Activated CD4-positive, alpha-beta T cell treated with anti-CD3 and anti-CD28 coated beads for 36 hours (primary cell): ENCODE measurements at regions of chr14 and their contacts with region 1.

Region 1: DNA sequence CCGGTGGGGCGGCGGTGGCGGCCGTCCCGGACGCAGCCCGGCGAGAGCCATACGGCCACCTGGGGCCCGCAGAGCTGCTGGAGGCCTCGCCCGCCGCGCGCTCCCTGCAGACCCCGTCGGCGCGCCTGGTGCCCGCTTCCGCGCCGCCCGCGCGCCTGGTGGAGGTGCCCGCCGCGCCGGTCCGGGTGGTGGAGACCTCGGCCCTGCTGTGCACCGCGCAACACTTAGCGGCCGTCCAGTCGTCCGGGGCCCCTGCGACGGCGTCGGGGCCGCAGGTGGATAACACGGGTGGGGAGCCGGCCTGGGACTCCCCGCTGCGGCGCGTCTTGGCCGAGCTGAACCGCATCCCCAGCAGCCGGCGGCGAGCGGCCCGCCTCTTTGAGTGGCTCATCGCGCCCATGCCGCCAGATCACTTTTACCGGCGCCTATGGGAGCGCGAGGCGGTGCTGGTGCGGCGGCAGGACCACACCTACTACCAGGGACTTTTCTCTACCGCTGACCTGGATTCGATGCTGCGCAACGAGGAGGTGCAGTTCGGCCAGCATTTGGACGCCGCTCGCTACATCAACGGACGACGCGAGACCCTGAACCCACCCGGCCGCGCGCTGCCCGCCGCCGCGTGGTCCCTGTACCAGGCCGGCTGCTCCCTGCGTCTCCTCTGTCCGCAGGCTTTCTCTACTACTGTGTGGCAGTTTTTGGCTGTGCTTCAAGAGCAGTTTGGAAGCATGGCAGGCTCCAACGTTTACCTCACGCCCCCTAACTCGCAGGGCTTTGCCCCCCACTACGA is 716 bp downstream of the RIOX1 start:
- DNase-seq: peak; percentile 84
- ATAC-seq: peak; percentile 79
- H3K4me3 Mint-ChIP-seq: peak overlapping the region; percentile 81
- H3K27ac Mint-ChIP-seq: peak overlapping the region; percentile 75
- H3K4me1 Mint-ChIP-seq: peaks cover 40% of the 10 kb centered on the region
- H3K27me3 Mint-ChIP-seq: peaks cover 2% of the 10 kb centered on the region

Region 2: GRCh38 chr14:73136387-73137225 is 354.8 kb before region 1 on chr14 and contains the start of gene PSEN1:
- CTCF ChIA-PET with region 1: interaction called, 3 read pairs
- POLR2A ChIA-PET with region 1: interaction called, 5 read pairs
- intact Hi-C with region 1: loop called in 1 of 2 experiments (anchors 1 kb)
- DNase-seq: peak; percentile 99
- ATAC-seq: peak; percentile 95
- H3K4me3 Mint-ChIP-seq: peak within 1 kb of the TSS; percentile 86
- H3K27ac Mint-ChIP-seq: peak within 1 kb of the TSS; percentile 82
- H3K4me1 Mint-ChIP-seq: peaks cover 31% of the 10 kb centered on the region
- H3K27me3 Mint-ChIP-seq: no peaks in the 10 kb centered on the region
- total RNA-seq, gene PSEN1: 31.2 to 31.6 TPM

Region 3: DNA sequence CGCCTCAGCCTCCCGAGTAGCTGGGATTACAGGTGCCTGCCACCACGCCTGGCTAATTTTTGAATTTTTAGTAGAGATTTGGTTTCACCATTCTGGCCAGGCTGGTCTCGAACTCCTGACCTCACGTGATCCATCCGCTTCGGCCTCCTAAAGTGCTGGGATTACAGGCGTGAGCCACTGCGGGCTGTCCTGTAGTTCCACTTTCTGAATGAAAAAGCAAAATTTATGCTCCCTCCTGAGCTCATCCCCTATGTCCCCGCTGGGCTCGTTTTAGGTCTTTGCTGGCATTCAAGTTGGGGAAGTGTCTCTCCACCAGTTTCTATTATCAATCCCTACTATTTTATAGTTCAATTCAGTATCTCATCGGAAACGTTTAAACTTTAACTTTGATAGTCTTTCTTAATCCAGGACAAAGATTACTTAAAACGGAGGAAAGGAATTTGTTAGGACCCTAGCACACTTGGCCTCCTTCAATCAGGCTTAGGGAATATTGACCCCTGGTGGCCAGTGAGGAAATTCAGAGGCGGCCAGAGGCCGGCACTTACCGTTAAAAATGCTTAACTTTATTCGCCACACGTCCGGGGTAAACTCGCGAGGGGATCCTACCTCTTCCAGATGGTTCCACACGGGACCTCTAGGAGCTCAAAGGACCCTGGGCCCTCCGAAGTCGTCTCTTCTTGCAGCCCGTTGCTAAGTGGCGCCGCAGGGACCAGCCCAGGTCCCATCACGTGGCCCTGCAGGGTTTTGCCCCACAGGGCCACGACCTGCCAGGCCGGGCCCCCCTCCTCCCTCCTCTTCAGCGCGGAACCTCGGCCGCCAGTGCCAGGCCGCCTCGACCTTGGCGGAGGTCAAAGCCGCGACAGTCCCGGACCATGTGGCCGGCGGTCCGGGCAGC is 141.9 kb after region 1 on chr14:
- CTCF ChIA-PET with region 1: interaction called, 8 read pairs
- POLR2A ChIA-PET with region 1: no interaction called
- intact Hi-C with region 1: loop called in 1 of 2 experiments (anchors 1 kb)
- DNase-seq: peak; percentile 74
- ATAC-seq: peak; percentile 82
- H3K4me3 Mint-ChIP-seq: peak overlapping the region; percentile 49
- H3K27ac Mint-ChIP-seq: peak overlapping the region; percentile 37
- H3K4me1 Mint-ChIP-seq: peaks cover 5% of the 10 kb centered on the region
- H3K27me3 Mint-ChIP-seq: peaks cover 12% of the 10 kb centered on the region

Region 4: DNA sequence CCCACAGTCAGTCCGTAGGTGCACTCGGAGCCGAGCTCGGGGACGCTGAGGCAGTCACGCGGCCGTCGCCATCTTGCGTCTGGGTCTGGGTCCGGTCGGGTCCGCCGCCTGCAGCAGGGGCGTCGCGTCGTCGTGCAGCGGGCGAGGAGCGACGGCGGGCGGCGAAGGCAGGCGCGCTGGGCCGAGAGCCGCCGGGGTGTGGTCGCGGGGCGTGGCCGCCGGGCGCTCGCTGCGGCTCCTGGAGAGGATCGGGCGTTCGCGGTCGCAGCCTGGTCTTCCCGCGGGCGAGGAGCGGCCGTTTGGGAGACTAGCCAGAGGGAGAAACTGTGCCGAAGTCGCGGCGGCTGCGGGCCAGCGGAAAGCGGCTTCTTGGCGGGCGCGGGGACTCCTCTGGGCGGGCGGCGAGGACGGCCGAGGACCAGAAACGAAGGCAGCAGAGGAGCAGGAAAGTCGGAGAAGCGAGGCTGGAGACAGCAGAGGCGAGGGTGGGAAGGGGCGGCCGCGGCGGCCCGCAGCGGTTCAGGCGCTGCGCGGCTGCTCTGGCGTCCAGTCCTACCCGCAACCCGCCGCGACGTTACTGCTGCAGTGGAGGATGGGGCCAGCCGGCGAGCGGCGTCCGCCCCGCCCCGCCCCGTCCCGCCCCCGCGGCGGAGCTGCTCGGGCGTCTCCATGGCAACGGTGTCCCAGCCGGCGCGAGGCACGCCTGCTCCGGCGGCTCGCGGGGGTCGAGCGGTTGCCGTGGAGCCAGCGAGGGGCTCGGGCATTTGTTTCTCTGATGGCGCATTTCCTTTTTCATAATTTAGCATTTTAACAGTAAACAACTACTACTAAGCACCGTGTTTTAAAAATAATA is 222.6 kb after region 1 on chr14 and contains the start of gene PNMA1:
- CTCF ChIA-PET with region 1: no interaction called
- POLR2A ChIA-PET with region 1: no interaction called
- intact Hi-C with region 1: loop called in 1 of 2 experiments (anchors 2 kb)
- DNase-seq: peak; percentile 92
- ATAC-seq: peak; percentile 79
- H3K4me3 Mint-ChIP-seq: peak within 1 kb of the TSS; percentile 98
- H3K27ac Mint-ChIP-seq: peak within 1 kb of the TSS; percentile 94
- H3K4me1 Mint-ChIP-seq: peaks cover 13% of the 10 kb centered on the region
- H3K27me3 Mint-ChIP-seq: no peaks in the 10 kb centered on the region
- total RNA-seq, gene PNMA1: 23.2 to 28.8 TPM

Region 5: DNA sequence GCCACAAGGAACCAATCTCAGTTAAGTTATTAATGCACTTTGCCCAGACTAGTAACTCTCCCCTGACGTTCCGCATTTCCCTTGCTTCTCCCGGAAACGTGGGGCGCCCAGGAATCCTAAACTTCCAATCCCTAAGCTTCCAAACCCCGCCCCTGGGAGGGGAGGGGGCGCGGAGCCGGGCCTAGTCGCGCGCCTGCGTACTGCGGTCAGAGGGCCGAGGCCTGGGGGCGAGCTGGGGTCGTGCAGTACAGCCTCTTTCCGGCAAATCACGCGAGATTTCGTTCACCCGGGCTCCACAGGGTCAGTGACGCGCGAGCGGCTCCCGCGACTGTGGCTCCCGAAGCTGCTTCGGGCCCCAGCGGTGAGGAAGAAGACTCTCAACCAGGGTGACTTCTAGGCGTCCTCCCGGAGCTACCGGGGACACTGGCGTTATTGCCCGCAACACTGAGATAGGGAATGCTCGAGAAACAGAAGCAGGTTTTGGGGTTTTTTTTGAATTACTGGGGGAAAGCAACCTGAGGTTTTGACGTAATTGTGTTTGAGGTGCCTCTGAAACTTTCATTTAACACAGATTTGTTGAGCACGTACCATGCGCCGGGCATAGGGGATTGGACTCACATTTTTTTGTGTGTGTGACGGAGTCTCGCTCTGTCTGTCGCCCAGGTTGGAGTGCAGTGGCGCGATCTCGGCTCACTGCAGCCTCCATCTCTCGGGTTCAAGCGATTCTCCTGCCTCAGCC is 360.4 kb after region 1 on chr14 and contains the start of gene PTGR2:
- CTCF ChIA-PET with region 1: no interaction called
- POLR2A ChIA-PET with region 1: interaction called, 6 read pairs
- intact Hi-C with region 1: loop called in 1 of 2 experiments (anchors 1 kb)
- DNase-seq: peak; percentile 94
- ATAC-seq: peak; percentile 94
- H3K4me3 Mint-ChIP-seq: peak within 1 kb of the TSS; percentile 98
- H3K27ac Mint-ChIP-seq: peak within 1 kb of the TSS; percentile 100
- H3K4me1 Mint-ChIP-seq: peaks cover 24% of the 10 kb centered on the region
- H3K27me3 Mint-ChIP-seq: no peaks in the 10 kb centered on the region
- total RNA-seq, gene PTGR2: 12.6 to 14.3 TPM

Region 6: DNA sequence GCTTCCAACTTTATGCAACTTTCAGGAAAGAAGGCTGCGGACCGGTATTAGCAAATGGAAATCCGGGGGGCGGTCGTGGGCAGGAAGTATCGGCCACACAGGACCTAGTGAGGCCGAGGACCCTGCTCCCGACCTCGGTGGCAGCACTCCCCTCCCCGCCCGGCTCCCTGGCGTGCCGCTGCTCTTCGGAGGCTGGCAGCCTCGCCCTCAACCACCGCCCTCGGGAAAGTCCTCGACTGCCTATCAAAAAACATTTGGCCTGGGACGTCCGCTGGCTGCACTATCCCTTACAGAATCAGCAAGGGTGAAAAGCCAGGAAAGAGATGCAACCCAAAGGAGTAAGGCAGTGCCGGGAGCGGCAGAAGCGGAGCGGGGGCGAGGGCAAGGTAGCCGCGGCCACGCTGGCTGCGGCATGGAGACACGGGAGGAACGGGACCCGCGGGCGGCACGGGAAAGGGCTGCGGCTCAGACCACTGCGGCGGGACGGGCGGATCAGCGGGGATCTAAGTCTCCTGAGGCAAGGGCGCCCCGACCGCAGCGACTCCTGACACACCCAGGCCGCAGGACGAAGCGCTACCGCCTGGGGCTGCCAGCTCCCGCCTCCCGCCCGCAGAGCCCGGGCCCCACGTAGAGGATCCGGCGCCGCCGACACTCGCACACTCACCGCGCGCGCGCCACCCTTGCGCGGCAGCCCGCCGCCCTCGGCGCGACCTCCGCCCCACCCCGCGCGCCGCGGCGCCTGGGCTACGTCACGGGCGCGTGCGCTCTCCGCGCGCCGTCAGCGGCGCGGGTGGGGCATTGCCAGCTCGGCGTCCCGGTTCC is 527.3 kb after region 1 on chr14 and contains the starts of genes BBOF1 and ENTPD5:
- CTCF ChIA-PET with region 1: no interaction called
- POLR2A ChIA-PET with region 1: no interaction called
- intact Hi-C with region 1: loop called in 1 of 2 experiments (anchors 1 kb)
- DNase-seq: peak; percentile 90
- ATAC-seq: peak; percentile 93
- H3K4me3 Mint-ChIP-seq: peak within 1 kb of the TSS; percentile 80
- H3K27ac Mint-ChIP-seq: peak within 1 kb of the TSS; percentile 93
- H3K4me1 Mint-ChIP-seq: peaks cover 12% of the 10 kb centered on the region
- H3K27me3 Mint-ChIP-seq: no peaks in the 10 kb centered on the region
- total RNA-seq, gene BBOF1: 1.9 to 2.1 TPM
- total RNA-seq, gene ENTPD5: 8.7 to 10.0 TPM